PC-9 (cell line): ENCODE measurements at regions of chr2 and their contacts with region 1.

Region 1: DNA sequence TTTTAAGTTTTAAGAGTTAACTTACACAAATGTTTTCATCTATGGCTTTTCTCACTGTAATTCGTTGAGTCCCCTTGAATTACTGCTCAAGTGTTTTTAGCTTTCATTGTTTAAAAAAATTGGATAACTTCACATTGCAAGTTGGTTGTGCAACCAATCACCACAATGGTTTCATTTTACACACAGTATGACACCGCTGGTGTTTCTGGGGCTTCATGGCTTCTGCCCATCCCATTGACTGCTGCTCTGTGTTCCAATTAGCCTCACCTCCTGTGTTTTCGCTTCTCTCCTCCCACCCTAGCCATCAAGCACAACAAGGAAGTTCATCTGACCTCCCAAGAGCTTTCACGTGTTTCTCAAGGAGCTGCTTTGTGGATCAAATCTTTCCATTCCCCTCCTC is 199.1 kb upstream of the CHAC2 start:
- DNase-seq: no peak
- H3K4me3 ChIP-seq: no peak overlapping the region
- H3K27ac ChIP-seq: no peak overlapping the region
- H3K4me1 ChIP-seq: no peaks in the 10 kb centered on the region
- H3K27me3 ChIP-seq: no peaks in the 10 kb centered on the region
- CTCF ChIP-seq: no peak

Region 2: GRCh38 chr2:53690876-53691275 is 122.4 kb after region 1 on chr2:
- CTCF ChIA-PET with region 1: no interaction called
- POLR2A ChIA-PET with region 1: interaction called, 14 read pairs
- intact Hi-C with region 1: no loop called
- DNase-seq: no peak
- H3K4me3 ChIP-seq: no peak overlapping the region
- H3K27ac ChIP-seq: no peak overlapping the region
- H3K4me1 ChIP-seq: no peaks in the 10 kb centered on the region
- H3K27me3 ChIP-seq: no peaks in the 10 kb centered on the region
- CTCF ChIP-seq: no peak